ENCODE measurements at regions of chr11 and their contacts with region 1.

Region 1: GRCh38 chr11:66001942-66002647 is at the starts of genes BANF1 and EIF1AD:
- DNase-seq: peak; percentile 96 to 97
- H3K4me3 ChIP-seq: peak within 1 kb of the TSS; percentile 92
- H3K4me3 Mint-ChIP-seq: peak within 1 kb of the TSS; percentile 99
- H3K27ac Mint-ChIP-seq: peak within 1 kb of the TSS; percentile 97
- H3K4me1 ChIP-seq: 0 out of 2 replicates have a peak, but pooled peaks cover 7% of the 10 kb centered on the region
- H3K4me1 Mint-ChIP-seq: no peaks in the 10 kb centered on the region
- H3K27me3 ChIP-seq: no peaks in the 10 kb centered on the region
- H3K27me3 Mint-ChIP-seq: no peaks in the 10 kb centered on the region
- CTCF ChIP-seq: no peak
- total RNA-seq, gene BANF1: 295 and 300 TPM in 2 replicates
- total RNA-seq, gene EIF1AD: 51.2 and 55.3 TPM in 2 replicates

Region 2: DNA sequence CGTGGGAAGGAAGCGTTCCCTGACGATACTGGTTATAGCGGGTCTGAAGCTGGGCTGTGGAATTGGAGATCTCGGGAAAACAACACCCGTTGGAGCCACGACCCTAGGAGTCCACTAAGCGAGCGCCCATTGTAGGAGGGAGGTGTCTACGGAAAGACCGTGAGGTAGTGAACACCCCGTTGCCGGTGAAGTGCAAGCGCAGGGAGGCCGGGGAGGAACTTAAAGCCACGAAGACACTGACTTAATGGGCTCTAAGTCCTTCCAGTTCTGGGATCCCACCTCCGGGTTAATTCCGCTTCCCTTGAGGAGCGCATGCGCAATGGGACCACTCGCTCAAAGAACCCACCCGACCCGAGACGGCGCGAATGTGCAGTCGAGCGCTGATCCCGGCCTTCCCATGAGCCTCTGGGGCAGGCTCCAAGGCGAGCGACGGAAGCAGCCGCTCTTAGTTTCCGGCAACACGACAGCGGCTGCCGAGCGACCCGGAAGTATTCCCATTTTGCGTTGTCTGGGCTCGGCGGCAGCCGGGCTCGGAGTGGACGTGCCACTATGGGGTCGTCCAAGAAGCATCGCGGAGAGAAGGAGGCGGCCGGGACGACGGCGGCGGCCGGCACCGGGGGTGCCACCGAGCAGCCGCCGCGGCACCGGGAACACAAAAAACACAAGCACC is 40.7 kb before region 1 on chr11 and contains the start of gene SART1:
- CTCF ChIA-PET with region 1: no interaction called
- POLR2A ChIA-PET with region 1: no interaction called
- intact Hi-C with region 1: loop called (anchors 1 kb)
- DNase-seq: peak; percentile 96 to 98
- H3K4me3 ChIP-seq: peak within 1 kb of the TSS; percentile 94
- H3K4me3 Mint-ChIP-seq: peak within 1 kb of the TSS; percentile 72
- H3K27ac Mint-ChIP-seq: peak within 1 kb of the TSS; percentile 95
- H3K4me1 ChIP-seq: peaks cover 18% of the 10 kb centered on the region
- H3K4me1 Mint-ChIP-seq: peaks cover 13% of the 10 kb centered on the region
- H3K27me3 ChIP-seq: no peaks in the 10 kb centered on the region
- H3K27me3 Mint-ChIP-seq: no peaks in the 10 kb centered on the region
- CTCF ChIP-seq: no peak
- total RNA-seq, gene SART1: 78.0 and 84.5 TPM in 2 replicates

Region 3: GRCh38 chr11:66022401-66023185 is 20.5 kb after region 1 on chr11:
- CTCF ChIA-PET with region 1: interaction called, 3 read pairs
- POLR2A ChIA-PET with region 1: no interaction called
- intact Hi-C with region 1: loop called (anchors 2 kb)
- DNase-seq: peak; percentile 73 to 89
- H3K4me3 ChIP-seq: no peak overlapping the region; the same call in 1 of the 2 replicates
- H3K4me3 Mint-ChIP-seq: peak overlapping the region; percentile 63
- H3K27ac Mint-ChIP-seq: peak overlapping the region; percentile 40
- H3K4me1 ChIP-seq: no peaks in the 10 kb centered on the region
- H3K4me1 Mint-ChIP-seq: no peaks in the 10 kb centered on the region
- H3K27me3 ChIP-seq: no peaks in the 10 kb centered on the region
- H3K27me3 Mint-ChIP-seq: peaks cover 3% of the 10 kb centered on the region
- CTCF ChIP-seq: peak; percentile 96

Region 4: GRCh38 chr11:66051766-66052663 is 49.9 kb after region 1 on chr11 and contains the start of gene SF3B2:
- CTCF ChIA-PET with region 1: interaction called, 4 read pairs
- POLR2A ChIA-PET with region 1: interaction called, 14 read pairs
- intact Hi-C with region 1: no loop called
- DNase-seq: peak; percentile 99
- H3K4me3 ChIP-seq: peak within 1 kb of the TSS; percentile 71
- H3K4me3 Mint-ChIP-seq: peak within 1 kb of the TSS; percentile 91
- H3K27ac Mint-ChIP-seq: peak within 1 kb of the TSS; percentile 96
- H3K4me1 ChIP-seq: peaks cover 9% of the 10 kb centered on the region
- H3K4me1 Mint-ChIP-seq: peaks cover 14% of the 10 kb centered on the region
- H3K27me3 ChIP-seq: no peaks in the 10 kb centered on the region
- H3K27me3 Mint-ChIP-seq: no peaks in the 10 kb centered on the region
- CTCF ChIP-seq: peak in 1 of 2 experiments; percentile 0
- total RNA-seq, gene SF3B2: 224 and 225 TPM in 2 replicates